SK-N-SH (cell line): ENCODE measurements at regions of chr19 and their contacts with region 1.

Region 1: GRCh38 chr19:41691268-41691970 is 3.3 kb upstream of the CEACAM7 start:
- DNase-seq: peak; percentile 67
- H3K4me3 ChIP-seq: peak overlapping the region in 1 of 2 experiments; percentile 35; a peak in 1 of 4 replicates
- H3K27ac ChIP-seq: no peak overlapping the region
- H3K4me1 ChIP-seq: no peaks in the 10 kb centered on the region
- H3K27me3 ChIP-seq: no peaks in the 10 kb centered on the region
- CTCF ChIP-seq: peak; percentile 63
- EP300 ChIP-seq: no peak
- RAD21 ChIP-seq: no peak

Region 2: GRCh38 chr19:41626877-41627276 is 64.5 kb before region 1 on chr19 and contains the start of gene CEACAM4:
- CTCF ChIA-PET with region 1: no interaction called
- POLR2A ChIA-PET with region 1: no interaction called
- DNase-seq: no peak
- H3K4me3 ChIP-seq: no peak within 1 kb of the TSS
- H3K27ac ChIP-seq: no peak within 1 kb of the TSS
- H3K4me1 ChIP-seq: no peaks in the 10 kb centered on the region
- H3K27me3 ChIP-seq: peaks cover 9% of the 10 kb centered on the region; the same call in 1 of the 2 replicates
- CTCF ChIP-seq: no peak
- EP300 ChIP-seq: no peak
- RAD21 ChIP-seq: no peak
- polyA plus RNA-seq, gene CEACAM4: not detected in 2 replicates

Region 3: DNA sequence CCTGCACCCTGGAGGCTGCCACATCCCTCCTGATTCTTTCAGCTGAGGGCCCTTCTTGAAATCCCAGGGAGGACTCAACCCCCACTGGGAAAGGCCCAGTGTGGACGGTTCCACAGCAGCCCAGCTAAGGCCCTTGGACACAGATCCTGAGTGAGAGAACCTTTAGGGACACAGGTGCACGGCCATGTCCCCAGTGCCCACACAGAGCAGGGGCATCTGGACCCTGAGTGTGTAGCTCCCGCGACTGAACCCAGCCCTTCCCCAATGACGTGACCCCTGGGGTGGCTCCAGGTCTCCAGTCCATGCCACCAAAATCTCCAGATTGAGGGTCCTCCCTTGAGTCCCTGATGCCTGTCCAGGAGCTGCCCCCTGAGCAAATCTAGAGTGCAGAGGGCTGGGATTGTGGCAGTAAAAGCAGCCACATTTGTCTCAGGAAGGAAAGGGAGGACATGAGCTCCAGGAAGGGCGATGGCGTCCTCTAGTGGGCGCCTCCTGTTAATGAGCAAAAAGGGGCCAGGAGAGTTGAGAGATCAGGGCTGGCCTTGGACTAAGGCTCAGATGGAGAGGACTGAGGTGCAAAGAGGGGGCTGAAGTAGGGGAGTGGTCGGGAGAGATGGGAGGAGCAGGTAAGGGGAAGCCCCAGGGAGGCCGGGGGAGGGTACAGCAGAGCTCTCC is 10.1 kb after region 1 on chr19:
- CTCF ChIA-PET with region 1: interaction called, 12 read pairs
- POLR2A ChIA-PET with region 1: no interaction called
- DNase-seq: no peak
- H3K4me3 ChIP-seq: no peak overlapping the region
- H3K27ac ChIP-seq: no peak overlapping the region
- H3K4me1 ChIP-seq: peaks cover 0 to 16% of the 10 kb centered on the region in 2 experiments; a peak in 1 of 4 replicates
- H3K27me3 ChIP-seq: peaks cover 10% of the 10 kb centered on the region
- CTCF ChIP-seq: peak; percentile 26; the same call in 1 of the 2 replicates
- EP300 ChIP-seq: no peak
- RAD21 ChIP-seq: no peak

Region 4: GRCh38 chr19:41706741-41707501 is 15.5 kb after region 1 on chr19:
- CTCF ChIA-PET with region 1: interaction called, 12 read pairs
- POLR2A ChIA-PET with region 1: no interaction called
- DNase-seq: peak; percentile 79
- H3K4me3 ChIP-seq: peak overlapping the region in 1 of 2 experiments; percentile 41; a peak in 1 of 4 replicates
- H3K27ac ChIP-seq: no peak overlapping the region
- H3K4me1 ChIP-seq: peaks cover 0 to 10% of the 10 kb centered on the region in 2 experiments; a peak in 1 of 4 replicates
- H3K27me3 ChIP-seq: peaks cover 29% of the 10 kb centered on the region
- CTCF ChIP-seq: peak; percentile 77
- EP300 ChIP-seq: no peak
- RAD21 ChIP-seq: no peak

Region 5: GRCh38 chr19:41844601-41845000 is 153.2 kb after region 1 on chr19 and contains the start of gene LYPD4:
- CTCF ChIA-PET with region 1: no interaction called
- POLR2A ChIA-PET with region 1: no interaction called
- DNase-seq: peak; percentile 53
- H3K4me3 ChIP-seq: no peak within 1 kb of the TSS
- H3K27ac ChIP-seq: no peak within 1 kb of the TSS
- H3K4me1 ChIP-seq: no peaks in the 10 kb centered on the region
- H3K27me3 ChIP-seq: peaks cover 17% of the 10 kb centered on the region; the same call in 1 of the 2 replicates
- CTCF ChIP-seq: no peak
- EP300 ChIP-seq: no peak
- RAD21 ChIP-seq: no peak
- polyA plus RNA-seq, gene LYPD4: not detected in 2 replicates